Thyroid gland (tissue), 4 donors: ENCODE measurements at regions of chr22 and their contacts with region 1.

Region 1: DNA sequence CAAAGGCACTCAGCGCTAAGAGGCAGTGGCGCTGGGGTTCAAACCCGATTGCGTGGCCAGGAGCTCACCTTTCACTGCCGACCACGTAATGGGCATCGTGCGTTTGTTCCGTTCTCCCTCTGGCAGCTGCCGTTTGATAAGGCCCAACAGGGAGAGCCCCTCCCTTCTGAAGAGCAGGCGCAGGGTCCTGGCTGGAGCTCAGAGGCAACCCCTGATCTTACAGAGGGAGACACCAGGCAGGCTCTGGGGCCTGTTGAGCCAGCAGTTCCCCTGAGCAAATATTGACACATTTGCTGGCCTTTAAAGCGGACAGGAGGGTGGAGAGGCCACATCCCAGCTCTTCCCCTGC is 11.7 kb upstream of the C1QTNF6 start:
- DNase-seq: no peak
- H3K4me3 ChIP-seq: no peak overlapping the region
- H3K27ac ChIP-seq: peak overlapping the region in 1 of 3 donors; percentile 56
- H3K4me1 ChIP-seq: peaks cover 23 to 32% of the 10 kb centered on the region in 2 donors
- H3K27me3 ChIP-seq: no peaks in the 10 kb centered on the region
- CTCF ChIP-seq: peak in 1 of 6 experiments; percentile 5
- POLR2A ChIP-seq: no peak

Region 2: DNA sequence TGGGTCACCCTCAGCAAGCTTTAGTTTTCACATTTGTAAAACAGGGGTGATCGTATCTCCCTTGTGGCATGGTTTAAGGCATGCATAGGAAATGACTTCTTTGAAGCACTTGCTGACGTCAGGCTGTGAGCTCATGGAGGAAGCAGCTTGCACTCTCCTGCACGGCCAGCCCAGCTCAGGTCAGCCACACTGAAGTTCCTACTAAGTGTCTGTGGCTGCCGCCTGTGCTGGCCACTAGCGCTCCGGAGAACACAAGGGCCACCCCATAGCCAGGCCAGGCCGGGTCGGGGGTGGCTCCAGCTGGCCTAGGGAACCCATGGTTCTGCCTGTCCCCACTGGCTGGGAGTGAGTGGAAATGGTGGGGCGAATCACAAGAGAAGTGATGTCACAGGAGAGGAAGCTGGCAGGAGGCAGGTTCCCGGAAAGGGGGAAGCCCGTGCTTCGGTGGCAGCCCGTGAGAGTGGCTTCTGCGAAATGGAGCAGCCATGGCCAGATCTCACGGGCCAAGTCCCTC is 120.0 kb before region 1 on chr22:
- intact Hi-C with region 1: loop called (anchors 2 kb)
- DNase-seq: peak; percentile 9 to 27
- H3K4me3 ChIP-seq: no peak overlapping the region
- H3K27ac ChIP-seq: no peak overlapping the region
- H3K4me1 ChIP-seq: no peaks in the 10 kb centered on the region
- H3K27me3 ChIP-seq: no peaks in the 10 kb centered on the region
- CTCF ChIP-seq: no peak
- POLR2A ChIP-seq: no peak

Region 3: GRCh38 chr22:37163575-37164504 is 35.9 kb before region 1 on chr22:
- intact Hi-C with region 1: loop called (anchors 2 kb)
- DNase-seq: no peak
- H3K4me3 ChIP-seq: no peak overlapping the region
- H3K27ac ChIP-seq: no peak overlapping the region
- H3K4me1 ChIP-seq: peaks cover 0 to 12% of the 10 kb centered on the region in 2 donors
- H3K27me3 ChIP-seq: no peaks in the 10 kb centered on the region
- CTCF ChIP-seq: no peak
- POLR2A ChIP-seq: no peak